Endothelial cell of umbilical vein (primary cell): ENCODE measurements at regions of chr2 and their contacts with region 1.

Region 1: GRCh38 chr2:74198461-74199274 is at the start of gene MTHFD2:
- DNase-seq: peak; percentile 97
- H3K4me3 ChIP-seq: peak within 1 kb of the TSS; percentile 76 to 90 (median 80)
- H3K27ac ChIP-seq: peak within 1 kb of the TSS; percentile 65
- H3K4me1 ChIP-seq: peaks cover 17% of the 10 kb centered on the region
- H3K27me3 ChIP-seq: no peaks in the 10 kb centered on the region
- CTCF ChIP-seq: peak; percentile 69 to 95
- POLR2A ChIP-seq: peak; percentile 91
- total RNA-seq, gene MTHFD2: 74.9 and 83.2 TPM in 2 replicates

Region 2: GRCh38 chr2:73859721-73860586 is 338.7 kb before region 1 on chr2:
- CTCF ChIA-PET with region 1: no interaction called
- POLR2A ChIA-PET with region 1: no interaction called
- dilution Hi-C with region 1: no loop called
- intact Hi-C with region 1: no loop called
- DNase-seq: peak; percentile 53
- H3K4me3 ChIP-seq: no peak overlapping the region
- H3K27ac ChIP-seq: no peak overlapping the region
- H3K4me1 ChIP-seq: peaks cover 4% of the 10 kb centered on the region
- H3K27me3 ChIP-seq: no peaks in the 10 kb centered on the region
- CTCF ChIP-seq: no peak
- POLR2A ChIP-seq: no peak

Region 3: DNA sequence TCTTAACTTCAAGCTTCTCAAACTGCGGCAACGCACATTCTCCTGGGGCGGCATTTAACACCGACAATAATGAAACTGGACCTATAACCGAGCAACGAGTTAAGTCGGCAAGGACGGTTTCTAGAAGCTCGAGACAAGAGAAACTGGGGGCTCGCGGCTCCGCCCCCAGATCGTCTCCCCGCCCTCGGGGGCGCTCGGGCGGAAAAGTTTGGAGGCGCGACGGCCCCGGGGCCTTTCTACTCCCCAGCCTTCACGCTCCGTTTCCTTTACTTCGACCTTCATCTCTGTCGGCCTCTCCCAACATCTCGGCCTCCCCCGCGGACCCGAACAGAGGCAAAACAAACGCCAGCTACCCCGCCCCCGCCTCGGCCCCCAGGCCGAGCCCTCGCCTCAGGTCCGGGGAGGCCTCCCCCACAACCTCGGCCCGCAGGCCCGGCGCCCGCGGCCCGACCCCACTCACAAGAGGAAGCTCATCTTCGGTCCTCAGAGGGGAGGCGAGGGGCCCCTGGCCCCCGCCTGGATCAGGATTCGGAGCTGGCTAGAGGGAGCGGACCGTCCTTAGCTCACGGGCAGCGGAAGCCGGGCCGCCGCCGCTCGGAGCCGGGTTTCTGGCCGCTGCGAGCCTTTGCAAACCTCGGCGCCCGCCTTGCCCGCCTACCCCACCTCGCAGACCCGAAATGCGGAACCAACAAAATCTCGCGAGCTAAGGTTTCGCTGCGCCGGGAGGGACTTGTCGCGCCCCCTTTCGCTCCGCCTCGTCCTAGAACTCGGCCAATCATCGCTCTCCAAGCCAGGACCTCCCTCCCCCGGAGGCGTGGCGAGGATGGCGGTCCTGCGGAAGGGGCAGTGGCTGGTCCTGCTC is 20.2 kb before region 1 on chr2 and contains the start of gene MOB1A:
- CTCF ChIA-PET with region 1: interaction called, 20 read pairs
- POLR2A ChIA-PET with region 1: interaction called, 7 read pairs
- dilution Hi-C with region 1: no loop called
- intact Hi-C with region 1: loop called (anchors 1 kb)
- DNase-seq: peak; percentile 100
- H3K4me3 ChIP-seq: peak within 1 kb of the TSS; percentile 93 to 100 (median 100)
- H3K27ac ChIP-seq: peak within 1 kb of the TSS; percentile 80
- H3K4me1 ChIP-seq: peaks cover 9% of the 10 kb centered on the region
- H3K27me3 ChIP-seq: no peaks in the 10 kb centered on the region
- CTCF ChIP-seq: no peak
- POLR2A ChIP-seq: peak; percentile 90
- total RNA-seq, gene MOB1A: 106 and 112 TPM in 2 replicates